A549 (cell line): ENCODE measurements at regions of chr12 and their contacts with region 1.

Region 1: DNA sequence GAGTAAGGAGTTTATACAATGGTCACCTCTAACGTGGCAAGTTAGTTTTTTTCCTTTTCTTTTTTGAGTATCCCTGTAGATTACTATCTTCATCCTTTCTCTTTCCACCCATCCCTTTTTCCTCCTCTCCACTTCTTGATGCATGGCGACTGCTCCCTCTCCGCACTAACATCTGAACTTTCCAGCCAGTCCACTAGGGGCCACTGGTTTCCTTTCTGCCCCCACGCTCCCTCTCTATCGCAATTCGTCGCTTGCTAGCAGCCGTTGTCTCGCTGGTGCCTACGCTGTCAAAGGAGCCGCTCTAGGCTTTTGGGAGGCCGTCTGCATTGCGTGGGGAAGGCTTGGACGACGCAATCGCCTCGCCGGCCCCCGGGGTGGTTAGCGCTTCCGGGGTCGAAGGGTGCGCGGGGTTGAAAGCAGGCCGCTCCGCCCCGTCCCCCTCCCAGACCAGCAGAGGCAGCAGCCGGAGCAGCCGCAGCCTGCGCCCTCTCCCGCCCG is at the start of gene PCBP2:
- DNase-seq: peak; percentile 99 to 100
- ATAC-seq: peak; percentile 94 to 96
- H3K4me3 ChIP-seq: peak within 1 kb of the TSS; percentile 88
- H3K27ac ChIP-seq: peak within 1 kb of the TSS; percentile 98 to 99
- H3K4me1 ChIP-seq: peaks cover 23% of the 10 kb centered on the region
- CTCF ChIP-seq: peak; percentile 66
- EP300 ChIP-seq: no peak
- POLR2A ChIP-seq: peak; percentile 72
- RAD21 ChIP-seq: peak; percentile 29 to 46; a peak in 3 of 5 replicates
- polyA plus RNA-seq, gene PCBP2: 367 and 604 TPM in 2 replicates

Region 2: GRCh38 chr12:53670299-53670698 is 218.6 kb after region 1 on chr12:
- CTCF ChIA-PET with region 1: no interaction called
- POLR2A ChIA-PET with region 1: interaction called, 10 read pairs
- DNase-seq: no peak
- ATAC-seq: peak in 1 of 2 experiments; percentile 13; a peak in 1 of 6 replicates
- H3K4me3 ChIP-seq: no peak overlapping the region
- H3K27ac ChIP-seq: no peak overlapping the region
- H3K4me1 ChIP-seq: peaks cover 13% of the 10 kb centered on the region; the same call in 2 of the 3 replicates
- CTCF ChIP-seq: no peak
- EP300 ChIP-seq: no peak
- POLR2A ChIP-seq: no peak
- RAD21 ChIP-seq: no peak